H1 (cell line): ENCODE measurements at regions of chr16 and their contacts with region 1.

Region 1: GRCh38 chr16:76265434-76266045 is 11.7 kb upstream of the CNTNAP4 start:
- DNase-seq: peak; percentile 31 to 92
- H3K4me3 ChIP-seq: no peak overlapping the region
- H3K27ac ChIP-seq: no peak overlapping the region
- H3K4me1 ChIP-seq: no peaks in the 10 kb centered on the region
- H3K27me3 ChIP-seq: no peaks in the 10 kb centered on the region
- CTCF ChIP-seq: peak; percentile 26 to 74 (median 52)
- EP300 ChIP-seq: no peak
- POLR2A ChIP-seq: no peak
- RAD21 ChIP-seq: peak; percentile 60 to 67

Region 2: GRCh38 chr16:76278980-76279379 is 13.4 kb after region 1 on chr16:
- CTCF ChIA-PET with region 1: interaction called, 27 read pairs
- POLR2A ChIA-PET with region 1: no interaction called
- DNase-seq: no peak
- H3K4me3 ChIP-seq: no peak overlapping the region
- H3K27ac ChIP-seq: no peak overlapping the region
- H3K4me1 ChIP-seq: peaks cover 0 to 2% (median 0%) of the 10 kb centered on the region in 4 experiments; a peak in 2 of 7 replicates
- H3K27me3 ChIP-seq: peaks cover 0 to 3% (median 0%) of the 10 kb centered on the region in 4 experiments; a peak in 2 of 7 replicates
- CTCF ChIP-seq: peak in 2 of 3 experiments; percentile 55 to 61; a peak in 3 of 4 replicates
- EP300 ChIP-seq: no peak
- POLR2A ChIP-seq: no peak
- RAD21 ChIP-seq: peak; percentile 83